ENCODE measurements at regions of chr13 and their contacts with region 1.

Region 1: DNA sequence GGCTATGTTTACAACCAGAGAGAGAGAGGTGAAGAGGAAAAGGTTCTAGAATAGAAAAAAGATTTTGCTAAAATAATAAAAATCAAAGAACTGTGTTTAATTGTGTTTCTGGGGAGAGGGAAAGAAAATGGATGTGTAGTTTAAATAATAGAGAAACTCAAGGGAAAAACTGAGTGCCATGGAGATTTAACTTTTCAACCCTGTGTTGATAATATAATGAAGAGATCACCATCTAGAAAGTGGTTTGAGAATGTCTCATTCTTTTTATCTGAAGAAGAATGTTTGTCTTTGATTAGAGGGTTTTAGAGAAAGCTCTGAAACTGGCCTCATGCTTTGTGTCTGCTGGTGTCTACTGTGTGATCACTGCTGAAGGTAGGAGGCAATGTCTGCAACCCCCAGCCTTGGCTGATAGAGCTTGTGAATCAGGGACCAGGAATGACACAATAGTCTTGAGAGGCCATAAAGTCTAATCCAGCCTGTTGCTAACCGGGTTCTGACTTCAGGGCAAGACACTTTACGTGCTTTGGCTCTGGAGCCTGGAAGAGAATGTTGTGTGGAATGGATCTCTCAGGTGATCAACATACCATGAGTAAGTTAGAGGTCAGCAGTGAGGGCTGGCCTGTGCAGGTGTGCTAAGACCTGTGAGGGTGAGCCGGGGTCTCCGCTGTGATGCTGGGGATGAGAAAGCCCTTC is 5.4 kb downstream of the COL4A2 start:
- DNase-seq: peak; percentile 91 to 95
- H3K4me3 ChIP-seq: no peak overlapping the region
- H3K4me3 Mint-ChIP-seq: peak overlapping the region; percentile 3
- H3K27ac Mint-ChIP-seq: peak overlapping the region; percentile 76
- H3K4me1 ChIP-seq: peaks cover 64% of the 10 kb centered on the region
- H3K4me1 Mint-ChIP-seq: peaks cover 34% of the 10 kb centered on the region
- H3K27me3 ChIP-seq: no peaks in the 10 kb centered on the region
- H3K27me3 Mint-ChIP-seq: no peaks in the 10 kb centered on the region
- CTCF ChIP-seq: peak in 1 of 2 experiments; percentile 5

Region 2: DNA sequence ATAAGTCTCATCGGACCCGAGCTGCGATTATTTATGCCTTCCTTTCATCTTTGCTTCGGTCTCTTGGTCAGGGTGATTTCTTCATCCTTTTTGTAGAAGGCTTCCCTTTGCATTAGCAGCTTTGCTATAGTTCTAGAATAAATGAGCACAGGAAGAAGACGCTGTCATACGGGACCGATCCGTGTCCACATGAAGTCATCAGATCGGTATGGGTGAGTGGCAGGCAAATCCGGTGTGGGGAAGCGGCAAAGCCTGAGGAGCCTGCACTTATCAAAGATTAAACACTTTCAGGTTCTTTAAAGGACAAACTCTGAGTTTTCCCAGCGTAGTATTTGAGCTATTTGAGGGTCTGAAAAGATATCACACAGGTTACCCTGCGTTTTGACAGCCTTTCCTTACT is 645.4 kb before region 1 on chr13:
- CTCF ChIA-PET with region 1: no interaction called
- POLR2A ChIA-PET with region 1: no interaction called
- intact Hi-C with region 1: no loop called
- DNase-seq: no peak
- H3K4me3 ChIP-seq: no peak overlapping the region
- H3K4me3 Mint-ChIP-seq: no peak overlapping the region
- H3K27ac Mint-ChIP-seq: no peak overlapping the region
- H3K4me1 ChIP-seq: no peaks in the 10 kb centered on the region
- H3K4me1 Mint-ChIP-seq: no peaks in the 10 kb centered on the region
- H3K27me3 ChIP-seq: no peaks in the 10 kb centered on the region
- H3K27me3 Mint-ChIP-seq: no peaks in the 10 kb centered on the region
- CTCF ChIP-seq: no peak

Region 3: GRCh38 chr13:110262508-110263291 is 49.8 kb before region 1 on chr13:
- CTCF ChIA-PET with region 1: no interaction called
- POLR2A ChIA-PET with region 1: no interaction called
- intact Hi-C with region 1: loop called (anchors 1 kb)
- DNase-seq: no peak
- H3K4me3 ChIP-seq: no peak overlapping the region
- H3K4me3 Mint-ChIP-seq: peak overlapping the region; percentile 14
- H3K27ac Mint-ChIP-seq: peak overlapping the region; percentile 52
- H3K4me1 ChIP-seq: peaks cover 38% of the 10 kb centered on the region
- H3K4me1 Mint-ChIP-seq: peaks cover 31% of the 10 kb centered on the region
- H3K27me3 ChIP-seq: no peaks in the 10 kb centered on the region
- H3K27me3 Mint-ChIP-seq: no peaks in the 10 kb centered on the region
- CTCF ChIP-seq: no peak

Region 4: DNA sequence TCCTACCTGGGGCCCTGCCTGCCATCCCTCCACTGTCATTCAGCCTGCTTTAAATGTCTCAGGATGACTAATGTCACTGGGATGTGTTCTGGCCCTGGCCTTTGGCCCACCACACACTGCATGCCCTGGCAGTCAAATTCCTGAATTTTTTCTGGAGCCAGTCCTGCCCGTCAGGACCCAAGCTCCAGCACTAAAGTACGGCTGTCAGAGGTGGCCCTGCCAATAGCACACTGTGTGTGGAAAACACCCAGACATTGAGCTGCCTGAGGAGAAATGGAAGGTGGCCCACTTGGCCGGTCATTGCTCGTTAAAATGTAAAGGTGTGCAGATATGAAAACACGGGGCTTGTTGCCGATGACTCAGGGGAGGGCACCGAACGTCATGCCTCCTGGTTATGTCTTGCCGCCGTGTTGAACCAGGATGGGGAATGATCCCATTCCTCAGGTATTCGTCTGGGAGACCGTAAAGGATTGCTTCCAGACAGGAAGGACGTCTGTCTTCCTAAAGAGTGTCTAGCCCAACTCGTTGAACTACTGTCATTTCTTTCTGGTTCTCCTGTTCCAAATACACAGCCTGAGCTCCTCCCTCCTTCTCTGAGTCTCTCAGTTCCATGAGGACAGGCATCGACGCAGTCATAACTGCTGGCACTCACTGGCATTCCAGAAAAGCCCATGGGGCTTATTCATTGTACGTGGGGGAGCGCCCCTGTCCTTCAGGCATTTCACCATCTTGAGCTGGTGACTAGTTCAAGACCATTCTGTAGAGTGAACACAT is 35.2 kb after region 1 on chr13:
- CTCF ChIA-PET with region 1: no interaction called
- POLR2A ChIA-PET with region 1: no interaction called
- intact Hi-C with region 1: loop called (anchors 1 kb)
- DNase-seq: peak; percentile 66 to 86
- H3K4me3 ChIP-seq: no peak overlapping the region
- H3K4me3 Mint-ChIP-seq: peak overlapping the region; percentile 19
- H3K27ac Mint-ChIP-seq: peak overlapping the region; percentile 79
- H3K4me1 ChIP-seq: peaks cover 19% of the 10 kb centered on the region
- H3K4me1 Mint-ChIP-seq: peaks cover 32% of the 10 kb centered on the region
- H3K27me3 ChIP-seq: no peaks in the 10 kb centered on the region
- H3K27me3 Mint-ChIP-seq: no peaks in the 10 kb centered on the region
- CTCF ChIP-seq: no peak

Region 5: DNA sequence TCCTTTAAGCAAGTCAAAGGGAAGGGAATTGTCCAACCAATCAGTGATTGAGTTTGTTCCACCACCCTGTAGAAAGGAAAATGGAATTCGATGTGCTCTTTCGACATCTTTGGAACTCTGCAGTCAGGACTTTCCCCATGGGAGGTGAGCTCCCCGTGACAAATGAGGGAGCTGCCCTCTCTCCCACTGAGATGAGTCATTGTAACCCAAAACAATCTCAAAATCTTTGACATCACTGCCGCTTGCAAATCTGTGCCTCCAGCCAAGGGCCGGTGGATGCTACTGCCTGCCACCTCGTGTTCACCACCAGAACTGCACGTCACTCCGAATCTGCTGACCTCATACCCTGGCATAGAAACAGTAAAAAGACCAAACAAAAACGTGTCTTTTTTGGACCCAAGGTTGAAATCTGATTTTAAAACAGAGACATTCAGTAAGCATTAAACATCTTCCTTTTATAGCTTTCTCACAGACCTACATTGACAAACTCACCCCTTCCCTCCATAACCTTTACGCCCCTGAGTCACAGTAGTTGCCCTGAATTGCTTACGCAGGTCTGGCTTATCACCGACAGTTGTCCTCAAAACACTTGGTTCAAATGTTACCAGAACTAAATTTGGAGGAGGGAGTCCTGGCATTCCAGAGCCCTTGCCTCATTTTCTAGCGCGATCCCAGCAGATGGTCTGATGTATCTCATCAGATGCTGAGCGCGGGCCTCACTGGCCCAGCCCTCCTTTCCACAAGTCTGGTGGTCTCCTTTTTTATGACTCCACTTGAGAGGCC is 99.8 kb after region 1 on chr13:
- CTCF ChIA-PET with region 1: interaction called, 8 read pairs
- POLR2A ChIA-PET with region 1: no interaction called
- intact Hi-C with region 1: loop called (anchors 1 kb)
- DNase-seq: peak; percentile 80 to 88
- H3K4me3 ChIP-seq: no peak overlapping the region
- H3K4me3 Mint-ChIP-seq: no peak overlapping the region
- H3K27ac Mint-ChIP-seq: peak overlapping the region; percentile 83
- H3K4me1 ChIP-seq: peaks cover 13% of the 10 kb centered on the region
- H3K4me1 Mint-ChIP-seq: peaks cover 12% of the 10 kb centered on the region
- H3K27me3 ChIP-seq: no peaks in the 10 kb centered on the region
- H3K27me3 Mint-ChIP-seq: no peaks in the 10 kb centered on the region
- CTCF ChIP-seq: peak; percentile 94

Region 6: GRCh38 chr13:110831447-110832204 is 519.1 kb after region 1 on chr13:
- CTCF ChIA-PET with region 1: no interaction called
- POLR2A ChIA-PET with region 1: no interaction called
- intact Hi-C with region 1: no loop called
- DNase-seq: no peak
- H3K4me3 ChIP-seq: no peak overlapping the region
- H3K4me3 Mint-ChIP-seq: no peak overlapping the region
- H3K27ac Mint-ChIP-seq: no peak overlapping the region
- H3K4me1 ChIP-seq: no peaks in the 10 kb centered on the region
- H3K4me1 Mint-ChIP-seq: peaks cover 8% of the 10 kb centered on the region
- H3K27me3 ChIP-seq: no peaks in the 10 kb centered on the region
- H3K27me3 Mint-ChIP-seq: no peaks in the 10 kb centered on the region
- CTCF ChIP-seq: no peak

Measured in Caco-2 (cell line).